Left ventricle myocardium inferior (tissue), 1 donor: ENCODE measurements at regions of chr5 and their contacts with region 1.

Region 1: GRCh38 chr5:5141625-5142532 is 1.7 kb downstream of the ADAMTS16 start:
- DNase-seq: no peak
- H3K4me3 ChIP-seq: peak overlapping the region; percentile 56
- H3K27ac ChIP-seq: no peak overlapping the region
- H3K4me1 ChIP-seq: peaks cover 23% of the 10 kb centered on the region
- H3K27me3 ChIP-seq: peaks cover 69% of the 10 kb centered on the region
- CTCF ChIP-seq: peak; percentile 85

Region 2: GRCh38 chr5:5050801-5051200 is 91.1 kb before region 1 on chr5:
- intact Hi-C with region 1: no loop called
- DNase-seq: no peak
- H3K4me3 ChIP-seq: no peak overlapping the region
- H3K27ac ChIP-seq: no peak overlapping the region
- H3K4me1 ChIP-seq: no peaks in the 10 kb centered on the region
- H3K27me3 ChIP-seq: peaks cover 6% of the 10 kb centered on the region
- CTCF ChIP-seq: no peak

Region 3: GRCh38 chr5:5078009-5078897 is 63.6 kb before region 1 on chr5:
- intact Hi-C with region 1: no loop called
- DNase-seq: no peak
- H3K4me3 ChIP-seq: no peak overlapping the region
- H3K27ac ChIP-seq: no peak overlapping the region
- H3K4me1 ChIP-seq: no peaks in the 10 kb centered on the region
- H3K27me3 ChIP-seq: peaks cover 44% of the 10 kb centered on the region
- CTCF ChIP-seq: no peak

Region 4: GRCh38 chr5:5188377-5189050 is 46.6 kb after region 1 on chr5:
- intact Hi-C with region 1: no loop called
- DNase-seq: no peak
- H3K4me3 ChIP-seq: no peak overlapping the region
- H3K27ac ChIP-seq: no peak overlapping the region
- H3K4me1 ChIP-seq: no peaks in the 10 kb centered on the region
- H3K27me3 ChIP-seq: peaks cover 15% of the 10 kb centered on the region
- CTCF ChIP-seq: no peak

Region 5: GRCh38 chr5:5419294-5420210 is 277.7 kb after region 1 on chr5:
- intact Hi-C with region 1: loop called (anchors 5 kb)
- DNase-seq: no peak
- H3K4me3 ChIP-seq: no peak overlapping the region
- H3K27ac ChIP-seq: no peak overlapping the region
- H3K4me1 ChIP-seq: peaks cover 32% of the 10 kb centered on the region
- H3K27me3 ChIP-seq: no peaks in the 10 kb centered on the region
- CTCF ChIP-seq: peak; percentile 82

Region 6: DNA sequence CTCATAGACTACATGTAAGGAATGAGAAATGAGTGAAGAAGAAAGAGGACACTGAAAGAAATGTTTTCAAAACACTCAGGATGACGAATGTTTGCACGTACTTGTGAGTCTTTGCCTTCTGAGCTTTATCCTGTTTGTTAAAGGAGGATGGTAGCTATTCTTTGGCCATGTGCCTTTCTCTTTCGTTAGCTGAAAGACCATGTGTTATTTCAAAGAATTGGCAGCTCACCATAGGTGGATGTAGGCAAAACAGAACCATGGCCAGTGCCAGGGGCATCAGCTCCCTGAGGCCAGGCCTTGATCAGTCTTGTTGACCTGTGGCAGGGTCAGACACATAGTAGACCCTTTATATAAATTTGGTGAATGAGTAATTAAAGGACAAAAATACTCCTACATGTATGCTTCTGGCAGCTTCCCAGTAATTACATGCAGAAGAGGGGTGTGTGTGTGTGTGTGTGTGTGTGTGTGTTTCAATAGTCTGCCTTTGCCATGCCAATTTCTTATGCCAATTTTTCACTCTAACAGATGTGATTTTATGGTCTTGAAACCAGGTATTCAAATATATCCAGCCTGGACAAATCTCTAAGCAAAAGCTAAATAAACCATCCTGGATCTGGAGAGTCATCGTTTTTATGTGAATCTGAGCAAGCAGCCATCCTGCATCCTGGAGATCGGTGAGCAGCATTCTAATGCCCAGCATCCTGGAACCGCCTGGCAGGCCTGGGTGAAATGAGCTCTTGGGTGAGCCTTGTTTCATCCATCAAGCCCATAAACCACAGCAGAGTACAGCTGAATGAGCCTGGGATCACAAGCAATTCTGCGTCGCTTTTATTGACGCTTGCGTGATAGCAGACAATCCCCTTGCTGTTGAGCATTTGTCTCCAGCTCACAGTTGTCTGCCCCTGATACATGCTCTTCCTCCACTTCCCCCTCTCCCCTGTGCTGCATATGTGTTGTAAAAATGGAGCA is 761.1 kb after region 1 on chr5:
- intact Hi-C with region 1: no loop called
- DNase-seq: no peak
- H3K4me3 ChIP-seq: no peak overlapping the region
- H3K27ac ChIP-seq: no peak overlapping the region
- H3K4me1 ChIP-seq: no peaks in the 10 kb centered on the region
- H3K27me3 ChIP-seq: peaks cover 13% of the 10 kb centered on the region
- CTCF ChIP-seq: no peak